ENCODE measurements at regions of chr2 and their contacts with region 1.

Region 1: GRCh38 chr2:106596844-106597243 is 109.7 kb downstream of the CD8B2 start:
- DNase-seq: no peak
- CTCF ChIP-seq: no peak

Region 2: GRCh38 chr2:106044021-106044420 is 552.8 kb before region 1 on chr2:
- CTCF ChIA-PET with region 1: no interaction called
- POLR2A ChIA-PET with region 1: no interaction called
- DNase-seq: no peak
- CTCF ChIP-seq: no peak

Region 3: DNA sequence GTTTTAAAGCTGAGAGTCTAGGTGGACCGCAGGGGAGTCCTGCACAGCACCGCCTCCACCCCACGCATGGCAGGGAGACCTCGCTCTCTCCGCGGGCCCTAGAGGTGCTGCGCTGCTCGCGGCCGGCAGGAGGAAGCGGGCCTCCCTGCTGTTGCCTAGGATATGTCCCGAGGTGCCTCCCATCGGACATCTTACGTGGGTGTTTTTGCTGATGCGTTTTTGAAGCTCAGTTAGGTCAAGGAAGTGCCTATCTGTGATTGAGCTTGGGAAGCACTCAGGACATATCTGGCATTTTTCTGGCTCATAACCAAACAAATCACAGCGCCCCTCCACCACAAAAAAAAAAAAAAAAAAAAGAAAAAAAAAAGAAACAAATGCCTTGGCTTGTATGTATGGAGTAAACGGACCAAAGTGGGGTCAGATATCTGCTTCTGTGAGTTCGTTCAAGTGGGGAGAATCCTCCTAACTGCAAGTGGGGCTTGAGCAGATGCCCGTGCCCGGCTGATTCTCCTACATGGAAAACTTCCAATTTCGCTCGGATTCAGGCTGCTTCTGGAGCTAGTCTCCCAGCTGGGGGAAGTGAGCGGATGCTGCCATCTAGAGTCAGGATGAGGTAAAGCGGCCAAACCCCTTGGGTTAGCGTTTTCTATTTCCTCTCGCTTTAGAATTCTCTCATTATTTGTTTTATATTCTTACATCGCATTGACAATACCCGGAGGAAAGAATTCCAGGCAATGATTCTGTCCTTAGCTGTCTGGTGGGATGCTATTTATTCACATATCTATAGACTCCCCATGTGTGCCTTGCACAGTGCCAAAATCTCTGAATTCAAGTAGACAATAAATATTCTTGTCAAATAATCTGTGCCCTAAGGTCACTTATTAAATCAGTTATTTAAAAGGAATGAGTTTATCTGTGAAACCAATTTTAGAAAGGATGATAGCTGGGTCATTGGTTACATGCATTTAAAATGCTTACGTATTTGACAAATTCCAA is 14.4 kb before region 1 on chr2:
- CTCF ChIA-PET with region 1: interaction called, 19 read pairs
- POLR2A ChIA-PET with region 1: no interaction called
- DNase-seq: peak; percentile 79
- CTCF ChIP-seq: peak; percentile 81